Right cardiac atrium (tissue), 5 donors: ENCODE measurements at regions of chr20 and their contacts with region 1.

Region 1: GRCh38 chr20:56554869-56555268 is 21.8 kb downstream of the FAM209B start:
- DNase-seq: no peak
- ATAC-seq: peak; percentile 80 to 83
- H3K4me3 ChIP-seq: no peak overlapping the region
- H3K27ac ChIP-seq: no peak overlapping the region
- H3K4me1 ChIP-seq: no peaks in the 10 kb centered on the region
- H3K27me3 ChIP-seq: no peaks in the 10 kb centered on the region

Region 2: GRCh38 chr20:56765162-56766073 is 210.5 kb after region 1 on chr20:
- intact Hi-C with region 1: no loop called
- DNase-seq: peak in 1 of 3 donors; percentile 68
- ATAC-seq: peak; percentile 57 to 65
- H3K4me3 ChIP-seq: no peak overlapping the region
- H3K27ac ChIP-seq: no peak overlapping the region
- H3K4me1 ChIP-seq: no peaks in the 10 kb centered on the region
- H3K27me3 ChIP-seq: no peaks in the 10 kb centered on the region

Region 3: DNA sequence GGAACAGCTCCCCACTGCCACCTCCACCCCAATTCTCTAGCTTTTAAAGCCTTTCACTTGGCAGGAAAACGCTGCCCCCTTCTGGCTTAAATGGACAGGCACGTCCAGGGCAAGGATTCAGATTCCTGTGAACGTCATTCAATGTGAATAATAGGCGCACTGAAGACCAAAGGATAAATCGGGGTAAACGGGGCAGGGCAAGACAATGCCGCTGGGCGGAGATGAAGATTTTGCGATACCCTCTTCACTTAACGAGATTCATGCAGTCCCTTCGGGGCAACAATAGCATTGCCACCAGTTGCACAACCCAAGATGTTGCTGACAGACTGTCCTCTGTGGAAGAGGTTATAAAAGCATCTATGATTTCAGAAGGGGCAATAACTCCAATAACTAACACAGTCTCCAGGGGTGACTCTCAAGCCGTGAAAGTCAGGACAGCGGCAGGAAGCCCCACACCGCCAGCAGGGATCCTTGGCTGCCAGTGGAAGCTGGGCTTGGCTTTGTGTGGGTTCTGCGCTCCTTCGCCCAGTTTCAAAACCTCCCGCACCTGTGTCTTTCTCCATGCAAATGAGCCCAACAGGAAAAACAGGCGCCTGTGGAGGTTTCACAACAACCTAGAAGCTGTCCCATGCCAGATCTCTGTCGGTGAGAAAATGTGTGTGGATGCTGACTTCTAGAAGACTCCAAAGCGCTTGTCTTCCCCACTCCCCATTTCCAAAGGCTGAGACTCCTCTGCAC is 419.8 kb after region 1 on chr20:
- intact Hi-C with region 1: loop called in 1 of 4 experiments (anchors 10 kb)
- DNase-seq: no peak
- ATAC-seq: no peak
- H3K4me3 ChIP-seq: no peak overlapping the region
- H3K27ac ChIP-seq: no peak overlapping the region
- H3K4me1 ChIP-seq: no peaks in the 10 kb centered on the region
- H3K27me3 ChIP-seq: no peaks in the 10 kb centered on the region

Region 4: DNA sequence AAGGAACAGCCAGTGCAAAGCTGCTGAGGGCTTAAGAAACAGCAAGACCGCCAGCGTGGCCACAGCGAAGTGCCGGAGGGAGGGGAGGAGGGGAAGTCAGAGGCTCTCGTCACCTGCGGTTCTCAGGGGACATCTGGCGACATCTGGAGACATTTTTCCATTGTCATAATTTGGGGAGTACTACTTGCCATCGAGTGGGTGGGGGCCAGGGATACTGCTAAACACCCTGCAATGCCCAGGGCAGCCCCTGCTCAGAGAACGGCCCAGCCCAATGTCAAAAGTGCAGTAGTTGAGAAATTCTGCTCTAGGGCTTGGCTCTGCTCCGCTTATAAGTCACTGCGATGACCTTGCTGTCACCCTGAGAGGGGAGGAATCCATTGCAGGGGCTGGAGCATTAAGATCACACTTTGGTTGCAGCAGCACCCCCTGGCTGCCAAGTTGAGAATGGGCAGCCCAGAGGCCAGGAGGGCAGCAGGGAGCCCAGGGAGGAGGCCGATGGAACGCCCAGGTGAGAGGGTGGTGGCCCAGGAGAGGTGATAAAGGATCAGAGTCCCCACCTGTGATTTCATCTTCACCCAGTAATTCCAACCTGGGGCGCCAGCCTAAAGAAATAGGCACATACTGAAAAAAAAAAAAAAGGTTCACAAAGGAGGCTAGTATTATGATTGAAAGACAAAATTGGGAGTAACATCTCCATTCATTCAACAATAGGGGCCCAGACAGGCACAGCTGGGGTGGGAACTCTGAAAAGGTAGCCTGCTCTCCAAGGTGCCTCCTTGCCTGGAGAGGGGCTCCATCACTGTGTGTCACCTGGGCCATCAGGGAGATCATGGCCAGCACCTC is 493.4 kb after region 1 on chr20:
- intact Hi-C with region 1: loop called in 1 of 4 experiments (anchors 10 kb)
- DNase-seq: peak in 1 of 3 donors; percentile 42
- ATAC-seq: peak in 1 of 2 donors; percentile 25
- H3K4me3 ChIP-seq: no peak overlapping the region
- H3K27ac ChIP-seq: no peak overlapping the region
- H3K4me1 ChIP-seq: no peaks in the 10 kb centered on the region
- H3K27me3 ChIP-seq: no peaks in the 10 kb centered on the region

Region 5: DNA sequence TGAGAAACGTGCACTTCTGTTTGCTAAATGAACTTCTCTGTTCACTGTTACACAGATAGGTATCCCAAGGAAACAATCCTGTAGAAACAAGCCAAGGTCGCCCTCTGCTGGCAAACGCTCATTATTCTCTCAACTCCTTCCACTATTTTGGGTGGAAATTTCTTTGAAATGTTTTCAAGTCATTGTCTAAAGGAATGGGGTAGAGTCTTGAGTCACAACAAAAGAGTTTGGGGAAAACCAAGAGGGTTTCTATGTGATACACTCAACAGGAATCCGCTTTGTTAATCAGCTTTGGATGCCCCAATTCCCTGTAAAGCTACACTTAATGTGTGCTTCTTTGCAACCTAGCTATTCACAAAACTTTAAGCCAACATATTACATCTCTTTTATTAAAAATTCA is 791.6 kb after region 1 on chr20:
- intact Hi-C with region 1: loop called in 1 of 4 experiments (anchors 10 kb)
- DNase-seq: peak; percentile 73 to 90 (median 78)
- ATAC-seq: peak; percentile 59 to 64
- H3K4me3 ChIP-seq: no peak overlapping the region
- H3K27ac ChIP-seq: no peak overlapping the region
- H3K4me1 ChIP-seq: no peaks in the 10 kb centered on the region
- H3K27me3 ChIP-seq: no peaks in the 10 kb centered on the region